ENCODE measurements at regions of chr14 and their contacts with region 1.

Region 1: DNA sequence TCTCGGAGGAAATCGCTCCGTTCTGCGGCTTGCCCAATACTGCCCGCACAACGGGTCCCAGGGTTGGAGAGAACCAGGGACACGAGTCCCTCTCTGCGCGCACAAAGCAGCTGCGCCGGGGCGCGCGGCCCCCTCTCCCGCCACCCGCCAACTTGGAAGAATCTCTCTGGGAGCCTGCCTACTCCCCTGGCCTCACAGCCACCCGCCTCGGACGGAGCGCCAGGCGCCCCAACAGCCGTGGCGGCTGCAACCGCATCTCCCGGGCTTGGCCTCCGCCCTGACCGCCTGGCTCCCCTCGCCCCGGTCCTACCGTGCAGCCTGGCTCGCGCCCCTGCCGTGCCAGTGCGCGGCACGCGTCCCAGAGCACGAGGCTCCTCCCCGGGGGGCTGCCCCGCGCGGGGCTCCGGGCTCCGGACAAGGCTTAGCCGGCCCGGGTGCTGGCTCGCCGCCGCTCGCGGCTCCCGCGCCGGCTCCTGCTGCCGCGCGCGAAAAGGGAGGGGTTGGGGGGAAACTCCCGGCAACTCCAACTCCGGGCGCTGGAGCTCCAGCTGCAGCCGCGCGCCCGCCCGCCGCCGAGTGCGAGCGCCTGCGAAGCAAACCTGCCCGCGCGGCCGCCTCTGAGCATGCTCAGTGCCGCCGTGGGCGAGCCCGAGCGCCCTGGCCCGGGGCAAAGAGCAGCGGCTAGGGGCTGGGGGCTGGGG is at the start of gene STXBP6:
- DNase-seq: peak; percentile 87
- ATAC-seq: peak; percentile 90
- total RNA-seq, gene STXBP6: 39.8 TPM

Region 2: DNA sequence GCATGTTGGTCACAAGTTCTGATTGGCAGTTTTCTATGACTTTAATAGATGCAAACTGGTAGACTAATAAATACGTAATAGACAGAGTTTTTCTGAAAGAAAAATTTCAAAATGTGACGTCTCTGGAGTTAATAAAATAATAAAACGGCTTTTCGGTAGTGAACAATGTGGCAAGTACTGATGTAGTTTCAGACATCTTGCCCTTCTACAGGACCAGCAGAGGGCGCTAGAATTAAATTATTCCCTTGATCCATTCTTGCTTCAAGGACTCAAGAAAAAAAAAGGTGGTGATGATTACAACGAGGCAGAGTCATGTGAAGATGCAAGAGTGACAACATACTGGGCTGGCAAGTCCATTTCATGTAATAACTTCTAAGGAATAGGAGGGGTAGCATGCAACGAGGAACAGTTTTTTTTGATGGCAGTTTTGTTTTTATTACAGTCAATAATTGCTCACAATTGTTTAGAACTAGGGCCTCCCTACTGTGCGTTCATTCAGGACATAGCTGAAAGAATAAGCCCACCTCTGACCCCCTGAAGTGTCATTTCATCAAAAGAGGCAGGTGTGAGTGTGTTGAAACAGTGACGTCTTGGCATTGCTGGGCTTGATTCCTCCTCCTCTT is 314.7 kb before region 1 on chr14:
- intact Hi-C with region 1: loop called (anchors 10 kb)
- DNase-seq: no peak
- ATAC-seq: peak; percentile 78

Region 3: GRCh38 chr14:24806061-24806678 is 243.5 kb before region 1 on chr14:
- intact Hi-C with region 1: loop called (anchors 2 kb)
- DNase-seq: peak; percentile 81
- ATAC-seq: peak; percentile 84

Region 4: GRCh38 chr14:24895243-24895583 is 154.5 kb before region 1 on chr14:
- intact Hi-C with region 1: no loop called
- DNase-seq: no peak
- ATAC-seq: peak; percentile 23

Region 5: GRCh38 chr14:25006961-25007795 is 42.5 kb before region 1 on chr14:
- intact Hi-C with region 1: no loop called
- DNase-seq: no peak
- ATAC-seq: peak; percentile 72

Region 6: DNA sequence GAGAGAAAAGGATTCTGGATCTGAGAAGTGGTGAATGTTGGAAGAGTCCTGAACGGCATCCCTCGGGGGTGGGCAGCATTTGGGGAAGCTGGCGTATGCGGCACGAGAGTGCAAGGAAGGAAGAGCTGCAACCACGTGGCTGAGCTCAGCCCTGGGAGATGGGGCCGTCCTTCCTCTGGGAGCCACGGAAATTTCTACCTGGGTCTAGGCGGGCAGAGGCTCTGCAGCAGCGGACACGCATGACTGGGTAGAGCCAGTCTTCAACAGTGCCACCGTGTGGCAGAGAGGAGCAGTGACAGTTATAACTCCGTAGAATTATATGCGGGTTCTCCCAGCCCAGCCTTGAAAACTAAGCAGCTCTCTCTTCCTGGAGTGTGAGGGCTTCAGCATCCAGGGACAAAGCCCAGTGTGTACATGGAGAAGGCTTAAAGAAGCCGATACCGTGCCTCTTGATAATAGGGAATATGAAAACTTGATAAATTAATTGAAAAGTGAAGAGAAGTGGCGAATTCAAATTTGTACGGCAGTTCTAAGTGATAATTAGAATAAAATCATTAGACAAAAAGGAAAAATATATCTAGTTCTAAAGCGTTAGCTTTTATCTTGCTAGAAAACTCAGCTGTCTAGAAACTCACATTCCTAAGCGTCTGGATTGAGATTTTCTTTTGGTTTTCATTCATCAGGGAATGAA is 83.2 kb after region 1 on chr14:
- intact Hi-C with region 1: loop called (anchors 5 kb)
- DNase-seq: peak; percentile 67
- ATAC-seq: peak; percentile 98